ENCODE measurements at regions of chr2 and their contacts with region 1.

Region 1: GRCh38 chr2:151238527-151239487 is 22.9 kb downstream of the RBM43 start:
- DNase-seq: peak in 7 of 10 donors; percentile 23 to 53 (median 35)
- ATAC-seq: peak; percentile 61 to 70
- H3K4me3 Mint-ChIP-seq: no peak overlapping the region
- H3K27ac Mint-ChIP-seq: peak overlapping the region in 1 of 10 donors; percentile 8
- H3K4me1 Mint-ChIP-seq: no peaks in the 10 kb centered on the region
- H3K27me3 Mint-ChIP-seq: peaks cover 0 to 1% (median 0%) of the 10 kb centered on the region in 5 donors

Region 2: DNA sequence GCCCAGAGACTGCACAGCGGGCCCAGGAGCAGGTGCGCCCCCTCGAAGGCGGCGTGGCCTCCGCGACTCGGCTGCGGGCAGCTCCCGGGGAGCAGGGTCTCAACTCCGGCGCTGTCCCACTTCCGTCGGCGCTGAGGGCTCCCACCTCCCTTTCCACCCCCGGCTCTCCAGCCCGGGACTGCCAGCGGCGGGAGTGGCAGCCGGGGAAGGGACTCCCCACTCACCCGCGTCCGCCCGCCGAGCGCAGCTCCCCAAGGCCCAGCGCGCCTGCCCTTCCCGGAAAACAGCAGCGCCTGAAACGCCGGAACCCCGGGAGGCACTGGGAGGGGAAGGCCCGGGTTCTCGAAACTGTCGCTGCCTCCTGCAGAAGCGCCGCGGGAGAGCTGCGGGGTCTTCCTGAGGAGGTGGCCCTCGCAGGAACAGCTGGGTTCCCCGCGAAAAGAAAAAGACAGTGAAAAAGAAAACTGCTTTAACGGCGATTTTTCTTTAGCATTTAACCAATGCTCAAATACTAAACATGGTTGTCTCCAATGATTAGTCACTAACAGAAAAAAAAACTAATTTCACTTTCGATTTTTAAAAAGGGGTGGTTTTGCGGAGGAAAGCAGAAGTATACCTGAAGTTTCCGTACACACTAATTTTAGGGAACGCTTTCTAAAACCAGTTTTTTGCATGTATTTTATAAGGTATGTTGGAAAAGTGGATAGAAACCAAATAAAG is 50.7 kb after region 1 on chr2 and contains the start of gene NMI:
- POLR2A ChIA-PET with region 1: interaction called, 11 read pairs
- DNase-seq: peak; percentile 31 to 83 (median 60)
- ATAC-seq: peak; percentile 75 to 78
- H3K4me3 Mint-ChIP-seq: peak within 1 kb of the TSS; percentile 84 to 98 (median 94)
- H3K27ac Mint-ChIP-seq: peak within 1 kb of the TSS; percentile 95 to 100 (median 98)
- H3K4me1 Mint-ChIP-seq: peaks cover 20 to 49% (median 45%) of the 10 kb centered on the region in 4 donors
- H3K27me3 Mint-ChIP-seq: no peaks in the 10 kb centered on the region
- polyA plus RNA-seq, gene NMI: 30.0 to 55.1 (median 47.2) TPM

Measured in naive thymus-derived CD8-positive, alpha-beta T cell (primary cell).